ENCODE measurements at regions of chr1 and their contacts with region 1.

Region 1: DNA sequence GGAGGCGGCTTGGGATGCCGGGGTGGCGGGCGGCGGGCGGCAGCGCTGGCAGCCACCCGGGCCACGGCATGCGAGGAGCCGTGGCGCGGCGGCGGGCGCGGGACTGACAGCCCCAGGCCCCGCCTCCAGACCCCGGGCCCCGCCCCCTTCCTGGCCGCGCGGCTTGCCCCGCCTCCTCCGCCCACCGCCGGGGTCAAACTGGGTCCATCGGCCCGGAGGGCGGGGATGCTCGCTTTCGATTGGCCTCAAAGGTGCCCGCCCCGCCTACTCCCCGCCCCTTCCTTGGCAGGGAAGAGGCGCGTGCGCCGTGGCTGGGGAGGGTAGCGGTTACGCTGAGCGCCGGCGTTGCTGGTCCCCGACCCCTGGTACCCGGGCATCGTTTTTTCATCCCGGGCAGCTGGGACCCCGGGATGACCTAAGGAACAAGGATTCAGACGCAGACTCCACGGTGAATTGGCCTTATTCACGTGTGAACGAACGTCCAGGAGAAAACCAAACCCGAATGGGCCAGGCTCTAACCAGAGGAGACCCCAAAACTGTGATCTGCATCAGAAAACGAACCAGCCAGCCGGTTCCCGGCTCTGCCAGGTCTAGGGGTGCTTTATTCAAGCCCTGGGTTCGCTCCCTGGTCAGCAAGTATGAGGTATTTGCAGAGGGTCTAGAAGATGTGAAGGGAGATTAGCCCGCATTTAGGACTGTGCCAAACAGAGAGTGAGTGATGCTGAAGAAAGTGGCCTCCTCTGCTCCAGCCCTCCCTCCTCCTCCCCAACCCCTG is 117.2 kb upstream of the GUCA2B start:
- DNase-seq: peak; percentile 99
- ATAC-seq: peak; percentile 95
- H3K4me3 Mint-ChIP-seq: peak overlapping the region; percentile 88
- H3K27ac Mint-ChIP-seq: no peak overlapping the region
- H3K4me1 Mint-ChIP-seq: peaks cover 11% of the 10 kb centered on the region
- H3K27me3 Mint-ChIP-seq: peaks cover 14% of the 10 kb centered on the region
- CTCF ChIP-seq: no peak

Region 2: GRCh38 chr1:41360993-41361753 is 674.8 kb before region 1 on chr1 and contains the start of gene FOXO6:
- CTCF ChIA-PET with region 1: no interaction called
- POLR2A ChIA-PET with region 1: no interaction called
- intact Hi-C with region 1: loop called (anchors 10 kb)
- DNase-seq: peak; percentile 90
- ATAC-seq: peak; percentile 89
- H3K4me3 Mint-ChIP-seq: peak within 1 kb of the TSS; percentile 76
- H3K27ac Mint-ChIP-seq: peak within 1 kb of the TSS; percentile 28
- H3K4me1 Mint-ChIP-seq: peaks cover 26% of the 10 kb centered on the region
- H3K27me3 Mint-ChIP-seq: peaks cover 32% of the 10 kb centered on the region
- CTCF ChIP-seq: no peak
- total RNA-seq, gene FOXO6: 0.12 and 0.55 TPM in 2 replicates

Region 3: GRCh38 chr1:41662061-41662764 is 373.8 kb before region 1 on chr1:
- CTCF ChIA-PET with region 1: no interaction called
- POLR2A ChIA-PET with region 1: no interaction called
- intact Hi-C with region 1: loop called (anchors 2 kb)
- DNase-seq: peak; percentile 73
- ATAC-seq: peak; percentile 78
- H3K4me3 Mint-ChIP-seq: peak overlapping the region; percentile 74
- H3K27ac Mint-ChIP-seq: no peak overlapping the region
- H3K4me1 Mint-ChIP-seq: peaks cover 78% of the 10 kb centered on the region
- H3K27me3 Mint-ChIP-seq: no peaks in the 10 kb centered on the region
- CTCF ChIP-seq: no peak

Region 4: DNA sequence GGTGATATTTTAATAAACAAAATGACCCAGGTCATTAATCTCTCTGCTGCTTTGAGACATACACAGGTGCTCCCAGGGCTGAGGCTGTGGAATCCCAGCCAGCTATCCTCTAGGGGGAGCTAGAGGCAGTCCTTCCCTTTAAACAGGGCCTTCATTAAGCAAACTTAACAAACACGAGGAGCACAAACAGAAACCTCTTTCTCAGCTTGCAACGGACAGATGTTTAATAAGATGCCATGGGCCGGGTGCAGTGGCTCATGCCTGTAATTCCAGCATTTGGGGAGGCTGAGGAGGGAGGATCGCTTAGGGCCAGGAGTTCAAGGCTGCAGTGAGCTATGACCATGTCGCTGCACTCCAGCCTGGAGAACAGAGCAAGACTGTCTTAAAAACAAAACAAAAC is 224.0 kb before region 1 on chr1:
- CTCF ChIA-PET with region 1: no interaction called
- POLR2A ChIA-PET with region 1: no interaction called
- intact Hi-C with region 1: loop called (anchors 2 kb)
- DNase-seq: no peak
- ATAC-seq: peak; percentile 34
- H3K4me3 Mint-ChIP-seq: no peak overlapping the region
- H3K27ac Mint-ChIP-seq: no peak overlapping the region
- H3K4me1 Mint-ChIP-seq: peaks cover 35% of the 10 kb centered on the region
- H3K27me3 Mint-ChIP-seq: no peaks in the 10 kb centered on the region
- CTCF ChIP-seq: no peak

Region 5: DNA sequence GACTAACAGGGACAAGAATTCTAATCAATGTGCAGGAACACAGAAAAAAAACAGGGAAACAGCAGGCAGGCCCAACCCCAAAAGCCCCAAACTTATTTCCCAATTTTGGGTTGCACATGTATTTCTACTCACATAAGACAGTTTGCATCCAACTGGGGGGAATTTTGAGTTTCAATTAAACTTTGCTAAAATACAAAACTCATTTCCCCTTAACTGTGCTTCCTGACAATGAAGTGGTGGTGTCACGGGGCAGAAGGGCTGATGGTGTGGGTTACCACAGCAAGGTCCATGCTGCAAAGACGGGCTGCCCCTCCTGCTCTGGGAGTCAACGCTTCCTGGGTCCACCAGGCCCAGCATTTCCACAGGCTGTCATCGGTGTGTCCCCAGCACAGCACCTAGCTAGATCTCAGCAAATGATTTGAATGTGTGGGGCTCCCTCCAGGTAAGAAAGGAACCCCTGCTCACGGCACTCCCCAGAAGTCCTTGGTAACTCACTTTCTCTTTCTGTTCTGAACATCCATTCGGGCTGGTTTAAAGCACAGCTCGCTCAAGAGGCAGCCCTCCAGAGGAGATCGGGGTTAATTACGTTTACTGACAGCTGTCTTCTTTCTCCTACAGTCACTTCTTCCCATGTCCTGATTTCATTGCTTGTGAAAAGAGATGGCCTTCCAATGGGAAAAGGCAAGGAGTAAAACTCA is 144.7 kb before region 1 on chr1:
- CTCF ChIA-PET with region 1: no interaction called
- POLR2A ChIA-PET with region 1: no interaction called
- intact Hi-C with region 1: loop called (anchors 10 kb)
- DNase-seq: peak; percentile 39
- ATAC-seq: peak; percentile 98
- H3K4me3 Mint-ChIP-seq: peak overlapping the region; percentile 83
- H3K27ac Mint-ChIP-seq: peak overlapping the region; percentile 88
- H3K4me1 Mint-ChIP-seq: peaks cover 15% of the 10 kb centered on the region
- H3K27me3 Mint-ChIP-seq: no peaks in the 10 kb centered on the region
- CTCF ChIP-seq: no peak

Region 6: DNA sequence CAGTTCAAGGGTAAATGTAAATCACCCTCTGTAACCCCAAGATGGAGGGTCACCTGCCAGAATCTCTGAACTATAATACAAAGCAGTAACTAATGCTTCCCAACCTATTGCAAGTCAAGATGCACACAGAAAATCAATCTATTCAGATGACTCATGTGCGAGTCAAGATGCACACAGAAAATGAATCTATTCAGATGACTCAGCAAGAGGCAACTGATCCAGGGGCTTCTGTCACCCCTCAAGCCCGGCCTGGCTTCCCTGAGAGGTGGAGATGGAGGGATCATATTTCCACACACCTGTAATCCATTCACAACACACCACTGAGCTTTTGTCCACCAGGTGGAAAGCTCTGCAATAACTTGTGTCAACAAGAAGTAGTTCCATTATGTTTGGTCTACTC is 99.9 kb before region 1 on chr1:
- CTCF ChIA-PET with region 1: no interaction called
- POLR2A ChIA-PET with region 1: no interaction called
- intact Hi-C with region 1: no loop called
- DNase-seq: no peak
- ATAC-seq: no peak
- H3K4me3 Mint-ChIP-seq: no peak overlapping the region
- H3K27ac Mint-ChIP-seq: no peak overlapping the region
- H3K4me1 Mint-ChIP-seq: no peaks in the 10 kb centered on the region
- H3K27me3 Mint-ChIP-seq: peaks cover 22% of the 10 kb centered on the region
- CTCF ChIP-seq: no peak

Region 7: GRCh38 chr1:42173155-42173933 is 137.3 kb after region 1 on chr1:
- CTCF ChIA-PET with region 1: no interaction called
- POLR2A ChIA-PET with region 1: no interaction called
- intact Hi-C with region 1: loop called (anchors 1 kb)
- DNase-seq: peak; percentile 62
- ATAC-seq: peak; percentile 77
- H3K4me3 Mint-ChIP-seq: no peak overlapping the region
- H3K27ac Mint-ChIP-seq: no peak overlapping the region
- H3K4me1 Mint-ChIP-seq: no peaks in the 10 kb centered on the region
- H3K27me3 Mint-ChIP-seq: no peaks in the 10 kb centered on the region
- CTCF ChIP-seq: peak; percentile 47

Region 8: DNA sequence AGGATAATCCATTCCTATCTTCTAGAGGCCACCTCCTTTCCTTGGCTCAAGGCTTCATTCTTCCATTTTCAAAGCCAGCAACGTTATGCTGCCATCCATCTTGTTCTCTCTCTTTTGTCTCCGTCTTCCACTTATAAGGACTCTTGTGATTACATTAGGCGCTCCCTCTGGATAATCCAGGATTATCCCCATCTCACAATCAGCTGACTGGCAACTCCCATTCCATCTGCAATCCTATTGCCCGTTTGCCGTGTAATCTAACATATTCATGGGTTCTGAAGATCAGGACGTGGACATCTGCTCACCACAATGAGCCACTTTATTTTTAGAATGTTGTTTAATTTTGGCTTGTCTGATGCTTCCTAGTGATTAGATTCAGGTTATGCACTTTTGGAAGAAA is 1046.7 kb after region 1 on chr1:
- CTCF ChIA-PET with region 1: no interaction called
- POLR2A ChIA-PET with region 1: interaction called, 12 read pairs
- intact Hi-C with region 1: no loop called
- DNase-seq: no peak
- ATAC-seq: no peak
- H3K4me3 Mint-ChIP-seq: no peak overlapping the region
- H3K27ac Mint-ChIP-seq: no peak overlapping the region
- H3K4me1 Mint-ChIP-seq: no peaks in the 10 kb centered on the region
- H3K27me3 Mint-ChIP-seq: peaks cover 11% of the 10 kb centered on the region
- CTCF ChIP-seq: no peak